Activated CD8-positive, alpha-beta T cell treated with anti-CD3 and anti-CD28 coated beads for 36 hours (primary cell): ENCODE measurements at regions of chr1 and their contacts with region 1.

Region 1: GRCh38 chr1:165367375-165367993 is 11.0 kb upstream of the LMX1A start:
- DNase-seq: peak; percentile 88
- ATAC-seq: peak; percentile 74
- H3K4me3 Mint-ChIP-seq: no peak overlapping the region
- H3K27ac Mint-ChIP-seq: no peak overlapping the region
- H3K4me1 Mint-ChIP-seq: no peaks in the 10 kb centered on the region
- H3K27me3 Mint-ChIP-seq: peaks cover 50% of the 10 kb centered on the region
- CTCF ChIP-seq: peak; percentile 92

Region 2: DNA sequence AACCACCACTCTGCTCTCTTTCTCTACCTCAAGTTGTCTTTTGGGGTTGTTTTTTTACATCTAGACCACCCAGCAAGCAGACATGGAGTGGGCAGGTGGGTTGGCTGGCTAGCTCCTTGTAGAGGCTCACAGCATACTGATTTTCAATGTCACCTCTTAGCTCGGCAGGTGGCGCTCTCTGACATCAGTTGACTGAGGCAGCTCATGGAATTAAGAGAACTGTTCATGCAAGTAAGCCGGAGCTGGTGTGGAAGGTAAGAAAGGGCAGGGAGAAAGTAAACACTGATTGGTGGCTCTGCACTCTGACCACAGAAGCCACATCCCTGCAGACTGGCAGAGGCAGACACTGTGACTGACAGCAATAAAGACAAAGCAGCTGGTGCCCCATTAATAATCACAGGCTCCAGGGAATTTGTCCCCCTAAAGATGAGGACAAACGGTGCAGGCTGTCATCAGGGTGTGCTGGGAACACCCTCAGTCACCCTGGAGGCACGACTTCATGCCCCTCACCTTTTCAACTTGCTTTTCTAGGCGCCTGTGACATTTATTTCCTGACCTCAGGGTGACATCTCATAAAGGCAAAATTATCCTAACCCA is 237.8 kb before region 1 on chr1:
- CTCF ChIA-PET with region 1: interaction called, 11 read pairs
- POLR2A ChIA-PET with region 1: no interaction called
- intact Hi-C with region 1: no loop called
- DNase-seq: peak; percentile 68
- ATAC-seq: peak; percentile 55
- H3K4me3 Mint-ChIP-seq: no peak overlapping the region
- H3K27ac Mint-ChIP-seq: no peak overlapping the region
- H3K4me1 Mint-ChIP-seq: no peaks in the 10 kb centered on the region
- H3K27me3 Mint-ChIP-seq: peaks cover 6% of the 10 kb centered on the region
- CTCF ChIP-seq: peak; percentile 29

Region 3: DNA sequence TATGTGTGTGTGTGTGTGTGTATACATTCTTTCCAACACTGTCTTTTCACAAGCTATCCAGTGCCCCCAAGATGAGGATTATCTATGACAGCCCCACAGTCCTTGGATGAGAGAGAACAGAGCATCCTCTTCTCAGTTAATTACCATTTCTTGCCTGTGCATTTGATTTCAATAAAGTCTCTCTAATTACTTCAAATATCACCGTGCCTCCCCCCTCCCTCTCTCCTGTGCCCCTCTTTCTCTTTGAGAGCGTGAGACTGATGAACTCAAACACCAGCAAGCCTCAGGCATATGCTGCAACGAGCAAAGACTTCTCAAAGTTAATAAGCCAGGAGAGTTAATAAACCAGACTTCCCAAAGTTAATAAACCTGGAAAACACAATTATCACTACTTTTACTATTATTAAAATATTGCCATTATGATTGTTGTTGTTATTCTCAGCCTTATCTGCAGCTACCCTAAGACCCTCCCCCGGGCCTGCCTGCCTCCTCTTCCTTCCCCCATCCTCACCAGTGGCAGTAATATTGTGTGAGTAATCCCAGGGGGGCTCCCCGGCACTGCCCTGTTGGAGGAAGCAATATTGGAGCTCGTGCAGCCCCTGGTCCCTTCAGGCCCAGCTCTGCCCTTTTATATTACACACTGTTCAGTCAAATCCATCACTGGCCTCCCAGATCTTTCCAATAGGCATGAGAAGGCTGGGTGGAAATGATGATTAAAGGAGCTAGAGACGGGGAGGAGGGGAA is 41.9 kb before region 1 on chr1:
- CTCF ChIA-PET with region 1: interaction called, 10 read pairs
- POLR2A ChIA-PET with region 1: no interaction called
- intact Hi-C with region 1: no loop called
- DNase-seq: no peak
- ATAC-seq: no peak
- H3K4me3 Mint-ChIP-seq: no peak overlapping the region
- H3K27ac Mint-ChIP-seq: no peak overlapping the region
- H3K4me1 Mint-ChIP-seq: no peaks in the 10 kb centered on the region
- H3K27me3 Mint-ChIP-seq: peaks cover 22% of the 10 kb centered on the region
- CTCF ChIP-seq: no peak

Region 4: GRCh38 chr1:165355977-165356811 is 11.3 kb before region 1 on chr1 and contains the start of gene LMX1A:
- CTCF ChIA-PET with region 1: interaction called, 106 read pairs
- POLR2A ChIA-PET with region 1: interaction called, 3 read pairs
- intact Hi-C with region 1: no loop called
- DNase-seq: no peak
- ATAC-seq: no peak
- H3K4me3 Mint-ChIP-seq: no peak within 1 kb of the TSS
- H3K27ac Mint-ChIP-seq: no peak within 1 kb of the TSS
- H3K4me1 Mint-ChIP-seq: peaks cover 5% of the 10 kb centered on the region
- H3K27me3 Mint-ChIP-seq: peaks cover 74% of the 10 kb centered on the region
- CTCF ChIP-seq: no peak
- total RNA-seq, gene LMX1A: not detected

Region 5: DNA sequence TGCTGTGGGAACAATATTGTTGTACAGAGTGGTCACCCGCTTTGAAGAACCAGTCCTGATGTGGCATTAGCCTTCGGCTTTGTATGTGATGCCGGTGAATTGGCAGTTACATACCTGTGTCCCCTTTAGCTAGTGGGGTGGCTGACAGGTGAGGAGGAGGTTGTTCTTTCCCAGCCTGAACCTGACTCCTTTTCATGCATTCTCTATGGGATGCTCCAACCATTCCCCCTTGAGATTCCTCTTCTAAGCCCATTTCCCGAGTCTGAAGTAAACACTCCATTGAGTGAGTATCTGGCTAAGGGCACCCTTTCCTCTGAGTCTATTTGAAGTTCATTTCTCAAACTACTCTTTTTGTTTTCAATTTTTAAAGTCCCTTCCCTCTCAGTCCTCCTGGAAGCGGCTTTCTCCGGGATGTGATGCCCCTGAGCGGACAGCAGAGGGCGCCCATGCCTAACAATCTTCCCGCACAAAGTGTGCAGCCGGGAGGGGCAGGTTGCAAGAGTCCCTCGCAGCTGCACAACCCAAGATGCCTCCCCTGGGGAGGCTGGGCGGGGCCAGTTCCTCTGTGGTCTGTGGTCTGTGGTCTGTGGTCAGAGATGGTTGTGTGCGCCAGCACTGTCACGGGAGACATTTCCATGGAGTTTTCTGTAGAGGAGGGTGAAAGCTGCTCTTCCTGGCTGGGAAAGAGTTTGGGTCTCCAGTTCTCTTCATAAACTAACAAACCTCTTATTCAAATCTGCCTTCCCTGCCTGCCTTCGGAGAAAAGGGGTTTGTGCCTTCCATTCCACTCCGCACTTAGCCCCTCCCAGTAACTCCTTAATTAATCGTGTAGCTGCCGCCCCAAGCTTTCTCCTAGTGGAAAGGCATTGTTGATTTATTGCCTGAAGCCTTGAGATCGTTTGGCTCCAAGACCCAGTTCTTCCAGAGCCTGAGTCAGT is 25.4 kb after region 1 on chr1:
- CTCF ChIA-PET with region 1: interaction called, 36 read pairs
- POLR2A ChIA-PET with region 1: no interaction called
- intact Hi-C with region 1: no loop called
- DNase-seq: peak; percentile 89
- ATAC-seq: peak; percentile 99
- H3K4me3 Mint-ChIP-seq: peak overlapping the region; percentile 60
- H3K27ac Mint-ChIP-seq: peak overlapping the region; percentile 77
- H3K4me1 Mint-ChIP-seq: peaks cover 9% of the 10 kb centered on the region
- H3K27me3 Mint-ChIP-seq: peaks cover 66% of the 10 kb centered on the region
- CTCF ChIP-seq: peak; percentile 87

Region 6: DNA sequence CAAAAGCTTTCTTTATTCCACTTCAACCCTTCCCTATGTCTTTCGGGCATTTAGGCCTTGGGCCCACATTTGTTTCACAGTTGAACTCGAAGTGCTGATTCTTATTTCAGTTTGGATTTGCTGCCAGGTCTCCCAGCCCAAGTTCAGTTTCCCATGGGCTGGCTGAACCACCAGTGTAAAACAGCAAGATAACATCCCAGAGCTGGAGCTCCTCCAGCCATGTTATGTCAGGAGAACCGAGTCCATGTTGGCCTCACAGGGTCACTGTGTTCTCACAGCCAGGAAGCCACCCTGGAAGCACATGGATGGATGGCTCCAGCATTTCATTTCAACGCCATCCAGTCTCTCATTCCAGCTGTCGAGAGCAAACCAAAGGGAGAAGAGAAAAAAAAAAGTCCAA is 122.7 kb after region 1 on chr1:
- CTCF ChIA-PET with region 1: no interaction called
- POLR2A ChIA-PET with region 1: no interaction called
- intact Hi-C with region 1: no loop called
- DNase-seq: no peak
- ATAC-seq: no peak
- H3K4me3 Mint-ChIP-seq: no peak overlapping the region
- H3K27ac Mint-ChIP-seq: no peak overlapping the region
- H3K4me1 Mint-ChIP-seq: no peaks in the 10 kb centered on the region
- H3K27me3 Mint-ChIP-seq: peaks cover 16% of the 10 kb centered on the region
- CTCF ChIP-seq: no peak